Psoas muscle (tissue), 8 donors: ENCODE measurements at regions of chr1 and their contacts with region 1.

Region 1: GRCh38 chr1:2412519-2413233 is at the start of gene PEX10:
- DNase-seq: peak; percentile 98 to 99
- ATAC-seq: peak; percentile 96 to 97 (median 97)
- H3K4me3 ChIP-seq: peak within 1 kb of the TSS; percentile 100
- H3K27ac ChIP-seq: peak within 1 kb of the TSS; percentile 91
- H3K4me1 ChIP-seq: peaks cover 19% of the 10 kb centered on the region
- H3K27me3 ChIP-seq: peaks cover 0 to 16% (median 7%) of the 10 kb centered on the region in 3 donors
- CTCF ChIP-seq: no peak
- total RNA-seq, gene PEX10: 14.1 to 19.7 (median 17.1) TPM

Region 2: GRCh38 chr1:2525920-2526823 is 113.5 kb after region 1 on chr1 and contains the start of gene PANK4:
- intact Hi-C with region 1: loop called (anchors 5 kb)
- DNase-seq: peak; percentile 95 to 96
- ATAC-seq: peak; percentile 77 to 85 (median 80)
- H3K4me3 ChIP-seq: peak within 1 kb of the TSS; percentile 77
- H3K27ac ChIP-seq: peak within 1 kb of the TSS; percentile 76
- H3K4me1 ChIP-seq: peaks cover 64% of the 10 kb centered on the region
- H3K27me3 ChIP-seq: no peaks in the 10 kb centered on the region
- CTCF ChIP-seq: no peak
- total RNA-seq, gene PANK4: 29.0 to 45.1 (median 35.3) TPM

Region 3: DNA sequence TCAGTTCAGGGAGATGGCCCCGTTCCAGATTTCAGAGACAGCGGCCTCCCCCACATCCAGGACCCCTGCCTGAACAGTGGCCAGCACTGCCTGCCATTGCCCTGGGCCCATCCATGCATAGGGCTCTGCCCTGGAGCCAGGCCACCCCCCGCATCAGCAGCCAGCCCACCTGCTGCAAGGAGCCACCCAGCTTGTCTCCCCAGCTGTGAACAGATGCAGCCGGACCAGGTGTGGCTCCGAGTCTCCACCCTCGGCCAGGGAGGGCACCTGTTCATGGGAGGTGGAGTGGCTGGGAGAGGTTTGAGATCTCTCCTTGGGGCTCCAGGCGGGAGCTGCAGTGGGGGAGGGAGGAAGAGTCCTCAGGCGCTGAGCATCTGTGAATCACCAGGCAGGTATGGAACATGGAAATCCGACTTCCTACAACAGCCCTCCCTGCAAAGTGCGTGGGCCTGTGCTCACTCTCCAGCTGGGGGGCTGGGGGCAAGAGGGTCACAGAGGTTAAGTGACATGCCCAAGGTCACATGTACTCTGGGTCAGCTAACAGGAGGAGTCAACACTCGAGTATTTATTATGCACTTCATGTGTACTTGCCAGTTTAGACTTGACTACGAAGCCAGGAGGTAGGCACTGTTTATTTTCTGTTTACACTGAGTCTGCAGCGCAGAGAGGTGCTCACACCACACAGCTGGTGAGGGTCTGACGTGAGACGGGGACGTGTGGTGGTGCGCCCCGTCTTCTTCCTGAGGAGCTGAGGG is 122.2 kb after region 1 on chr1:
- intact Hi-C with region 1: loop called in 1 of 2 experiments (anchors 5 kb)
- DNase-seq: no peak
- ATAC-seq: no peak
- H3K4me3 ChIP-seq: no peak overlapping the region
- H3K27ac ChIP-seq: no peak overlapping the region
- H3K4me1 ChIP-seq: peaks cover 30% of the 10 kb centered on the region
- H3K27me3 ChIP-seq: peaks cover 0 to 16% (median 8%) of the 10 kb centered on the region in 3 donors
- CTCF ChIP-seq: no peak

Region 4: GRCh38 chr1:2545759-2546514 is 133.3 kb after region 1 on chr1:
- intact Hi-C with region 1: loop called (anchors 1 kb)
- DNase-seq: peak; percentile 86 to 88
- ATAC-seq: peak; percentile 44 to 68 (median 58)
- H3K4me3 ChIP-seq: peak overlapping the region; percentile 66
- H3K27ac ChIP-seq: peak overlapping the region; percentile 83
- H3K4me1 ChIP-seq: peaks cover 15% of the 10 kb centered on the region
- H3K27me3 ChIP-seq: peaks cover 0 to 42% (median 13%) of the 10 kb centered on the region in 3 donors
- CTCF ChIP-seq: no peak

Region 5: DNA sequence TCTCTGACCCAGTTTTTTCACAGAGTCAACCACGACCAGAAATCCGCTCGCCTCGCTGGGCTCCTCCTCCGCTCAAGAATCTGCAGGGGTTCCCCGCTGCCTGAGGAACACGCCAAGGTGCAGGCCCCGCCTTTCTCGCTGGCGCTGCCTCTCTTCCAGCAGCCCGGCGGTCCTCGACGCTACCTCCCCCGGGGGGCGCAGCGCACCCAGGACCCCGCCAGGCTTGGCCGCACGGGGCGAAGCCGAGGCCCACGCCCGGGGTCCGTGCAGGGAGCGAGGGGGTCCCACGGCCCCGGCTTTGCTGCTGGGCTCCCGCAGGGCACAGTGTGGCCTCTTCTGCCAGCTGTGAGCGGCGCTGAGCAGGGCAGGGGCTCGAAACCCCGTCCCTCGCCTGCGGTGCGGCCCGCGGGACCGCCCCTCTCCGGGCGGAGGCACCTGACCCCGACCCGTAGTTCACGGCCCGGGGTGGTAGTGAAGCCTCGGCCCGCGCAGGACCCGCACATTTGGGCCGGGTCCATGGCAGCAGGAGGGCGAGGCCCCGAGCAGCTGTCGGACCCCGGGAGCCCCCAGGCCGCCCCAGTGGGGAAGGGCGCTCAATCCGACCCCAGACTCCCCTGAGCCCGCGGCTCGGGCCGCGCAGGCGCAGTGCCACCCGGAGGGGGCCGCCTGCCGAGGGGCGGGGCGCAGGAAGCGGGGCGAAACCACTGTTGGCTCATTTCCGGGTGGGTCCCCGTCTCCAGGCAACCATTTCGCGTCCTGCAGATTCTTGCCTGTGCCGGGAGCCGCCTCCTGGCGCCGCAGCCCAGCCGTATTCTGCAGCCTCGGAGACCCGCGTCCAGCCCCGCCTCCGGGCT is 230.1 kb after region 1 on chr1:
- intact Hi-C with region 1: loop called in 1 of 2 experiments (anchors 10 kb)
- DNase-seq: peak; percentile 90 to 92
- ATAC-seq: peak; percentile 62 to 85 (median 64)
- H3K4me3 ChIP-seq: peak overlapping the region; percentile 79
- H3K27ac ChIP-seq: peak overlapping the region; percentile 68
- H3K4me1 ChIP-seq: no peaks in the 10 kb centered on the region
- H3K27me3 ChIP-seq: peaks cover 0 to 45% (median 28%) of the 10 kb centered on the region in 3 donors
- CTCF ChIP-seq: no peak

Region 6: DNA sequence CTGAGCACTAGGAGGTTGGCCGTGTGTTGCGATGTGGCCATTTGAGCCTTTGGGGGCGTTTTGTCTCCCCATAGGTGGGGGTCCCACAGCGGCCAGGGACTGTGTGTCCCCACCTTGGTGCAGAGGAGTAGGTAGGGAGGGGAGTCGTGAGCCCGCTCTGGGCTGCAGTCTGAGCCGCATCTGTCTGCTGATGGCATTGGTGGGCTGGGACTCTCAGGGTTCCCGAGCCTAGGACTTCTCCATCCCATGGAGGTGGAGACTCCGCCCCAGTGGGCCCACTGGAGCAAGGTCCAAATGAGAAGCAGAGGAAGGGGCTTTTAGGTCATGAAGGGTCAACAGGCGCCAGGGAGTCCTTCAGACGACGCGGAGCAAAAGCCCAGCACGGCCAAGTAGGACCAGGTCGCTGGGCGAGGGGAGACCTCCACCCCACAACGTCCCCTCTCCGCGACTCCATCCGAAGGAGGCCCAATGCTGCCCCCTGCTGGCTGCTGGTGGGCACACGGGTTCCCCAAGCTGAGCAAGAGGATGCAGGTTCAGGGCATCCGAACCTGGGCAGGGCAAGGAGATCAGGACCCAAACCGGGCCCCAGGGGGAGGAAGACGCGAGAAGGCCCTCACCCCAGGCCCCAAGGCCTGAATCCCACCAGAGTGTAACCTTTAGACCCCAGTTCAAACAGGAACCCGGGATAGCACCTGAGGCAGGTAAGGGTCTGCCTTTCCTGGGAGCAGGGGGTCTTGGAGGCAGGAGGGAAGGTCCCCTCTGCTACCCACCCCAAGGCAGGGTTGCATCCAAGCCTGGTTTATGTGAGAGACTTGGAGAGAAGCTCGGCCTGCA is 373.9 kb after region 1 on chr1:
- intact Hi-C with region 1: loop called in 1 of 2 experiments (anchors 5 kb)
- DNase-seq: peak; percentile 48 to 60
- ATAC-seq: no peak
- H3K4me3 ChIP-seq: no peak overlapping the region
- H3K27ac ChIP-seq: no peak overlapping the region
- H3K4me1 ChIP-seq: no peaks in the 10 kb centered on the region
- H3K27me3 ChIP-seq: peaks cover 0 to 56% (median 11%) of the 10 kb centered on the region in 3 donors
- CTCF ChIP-seq: peak; percentile 51